Caco-2 (cell line): ENCODE measurements at regions of chr22 and their contacts with region 1.

Region 1: DNA sequence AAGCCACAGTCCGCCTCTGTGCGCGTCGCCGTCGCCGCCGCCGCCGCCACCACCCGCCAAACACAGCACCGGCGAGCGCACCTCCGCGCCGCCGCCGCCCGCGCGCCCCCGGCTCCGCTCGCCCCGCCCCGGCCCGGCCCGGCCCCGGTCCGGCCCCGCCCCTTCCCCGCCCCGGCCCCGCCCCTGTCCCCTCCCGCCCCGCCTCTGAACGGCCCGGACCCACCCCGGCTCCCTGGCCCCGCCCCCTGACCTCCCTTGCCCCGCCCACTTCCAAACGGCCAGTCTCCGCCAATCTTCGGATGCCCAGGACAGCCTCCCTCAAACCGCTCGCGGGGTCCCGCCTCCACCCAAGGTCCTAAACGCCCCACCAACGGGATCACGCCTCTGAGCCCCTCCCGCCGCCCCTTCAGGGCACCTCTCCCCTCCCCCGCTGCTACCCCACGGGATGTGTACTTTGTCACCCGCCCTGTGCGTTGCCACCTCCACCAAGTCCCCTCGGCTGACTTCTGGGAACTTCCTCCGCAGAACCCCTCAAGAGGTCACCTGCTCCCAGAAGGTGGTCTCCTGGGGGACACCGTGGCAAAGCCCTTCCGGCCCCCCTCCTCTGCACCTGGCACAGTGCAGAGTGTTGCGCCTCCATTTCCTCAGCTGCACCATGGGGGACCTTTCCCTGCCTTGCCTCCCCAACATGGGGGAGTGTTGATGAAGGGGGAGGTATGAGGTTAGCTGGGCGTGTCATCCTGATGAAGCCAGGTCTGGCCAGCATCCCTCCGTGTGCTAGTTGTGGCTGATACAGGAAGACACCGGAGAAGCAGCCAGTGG is at the start of gene KIAA0930:
- DNase-seq: peak; percentile 74 to 80
- H3K4me3 ChIP-seq: peak within 1 kb of the TSS; percentile 51
- H3K4me3 Mint-ChIP-seq: peak within 1 kb of the TSS; percentile 76
- H3K27ac Mint-ChIP-seq: no peak within 1 kb of the TSS
- H3K4me1 ChIP-seq: peaks cover 24% of the 10 kb centered on the region
- H3K4me1 Mint-ChIP-seq: peaks cover 4% of the 10 kb centered on the region
- H3K27me3 ChIP-seq: no peaks in the 10 kb centered on the region
- H3K27me3 Mint-ChIP-seq: no peaks in the 10 kb centered on the region
- CTCF ChIP-seq: no peak
- total RNA-seq, gene KIAA0930: 34.7 and 38.8 TPM in 2 replicates

Region 2: GRCh38 chr22:45376703-45377102 is 135.7 kb after region 1 on chr22:
- CTCF ChIA-PET with region 1: no interaction called
- POLR2A ChIA-PET with region 1: interaction called, 13 read pairs
- intact Hi-C with region 1: no loop called
- DNase-seq: no peak
- H3K4me3 ChIP-seq: no peak overlapping the region
- H3K4me3 Mint-ChIP-seq: no peak overlapping the region
- H3K27ac Mint-ChIP-seq: no peak overlapping the region
- H3K4me1 ChIP-seq: no peaks in the 10 kb centered on the region
- H3K4me1 Mint-ChIP-seq: no peaks in the 10 kb centered on the region
- H3K27me3 ChIP-seq: no peaks in the 10 kb centered on the region
- H3K27me3 Mint-ChIP-seq: no peaks in the 10 kb centered on the region
- CTCF ChIP-seq: no peak